Caco-2 (cell line): ENCODE measurements at regions of chr1 and their contacts with region 1.

Region 1: GRCh38 chr1:246608616-246609376 is 42.5 kb downstream of the CNST start:
- DNase-seq: peak; percentile 89 to 91
- H3K4me3 ChIP-seq: peak overlapping the region; percentile 5; the same call in 1 of the 2 replicates
- H3K4me3 Mint-ChIP-seq: peak overlapping the region; percentile 63
- H3K27ac Mint-ChIP-seq: peak overlapping the region; percentile 70
- H3K4me1 ChIP-seq: peaks cover 15% of the 10 kb centered on the region; the same call in 1 of the 2 replicates
- H3K4me1 Mint-ChIP-seq: no peaks in the 10 kb centered on the region
- H3K27me3 ChIP-seq: no peaks in the 10 kb centered on the region
- H3K27me3 Mint-ChIP-seq: no peaks in the 10 kb centered on the region
- CTCF ChIP-seq: peak in 1 of 2 experiments; percentile 33

Region 2: GRCh38 chr1:246506674-246507481 is 101.9 kb before region 1 on chr1 and contains the start of gene SMYD3:
- CTCF ChIA-PET with region 1: no interaction called
- POLR2A ChIA-PET with region 1: no interaction called
- intact Hi-C with region 1: loop called (anchors 5 kb)
- DNase-seq: peak; percentile 72 to 80
- H3K4me3 ChIP-seq: peak within 1 kb of the TSS; percentile 98
- H3K4me3 Mint-ChIP-seq: peak within 1 kb of the TSS; percentile 95
- H3K27ac Mint-ChIP-seq: peak within 1 kb of the TSS; percentile 71
- H3K4me1 ChIP-seq: peaks cover 5% of the 10 kb centered on the region
- H3K4me1 Mint-ChIP-seq: peaks cover 9% of the 10 kb centered on the region
- H3K27me3 ChIP-seq: no peaks in the 10 kb centered on the region
- H3K27me3 Mint-ChIP-seq: no peaks in the 10 kb centered on the region
- CTCF ChIP-seq: peak in 1 of 2 experiments; percentile 24
- total RNA-seq, gene SMYD3: 33.0 and 37.7 TPM in 2 replicates

Region 3: DNA sequence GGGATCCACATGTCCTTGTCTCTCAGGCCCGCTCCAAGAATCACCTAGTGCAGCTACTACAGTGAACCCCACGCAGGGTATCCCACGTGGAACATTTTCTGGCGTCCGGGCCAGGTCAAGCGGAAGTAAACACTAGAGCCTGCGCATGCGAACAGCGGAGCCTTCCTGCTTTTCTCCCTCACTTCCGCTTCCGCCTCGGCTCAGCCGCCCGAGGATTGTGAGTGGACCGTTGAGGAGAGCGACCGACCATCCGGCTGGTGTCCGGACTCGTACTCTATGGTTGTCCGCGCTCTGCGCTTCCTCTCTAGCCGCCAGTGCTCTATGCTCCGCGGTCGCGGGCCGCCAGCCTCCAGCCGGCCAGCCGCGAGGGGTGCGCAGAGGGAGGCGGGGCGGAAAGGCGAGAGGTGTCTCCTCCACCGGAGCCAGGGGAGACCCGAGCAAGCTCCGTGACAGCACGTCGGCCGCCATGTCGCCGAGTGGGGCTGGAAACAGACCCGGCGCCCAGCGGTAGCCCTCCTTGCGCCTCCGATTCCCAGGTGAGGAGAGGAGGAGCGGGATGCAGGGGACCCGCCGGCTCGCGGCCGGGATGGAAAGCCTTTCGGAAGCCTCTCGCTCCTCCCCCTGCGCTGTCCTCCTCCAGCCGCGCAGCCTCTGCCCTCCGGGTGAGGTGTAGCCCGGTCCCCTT is 42.5 kb before region 1 on chr1 and contains the starts of genes CNST and TFB2M:
- CTCF ChIA-PET with region 1: no interaction called
- POLR2A ChIA-PET with region 1: interaction called, 3 read pairs
- intact Hi-C with region 1: loop called (anchors 1 kb)
- DNase-seq: peak; percentile 98
- H3K4me3 ChIP-seq: peak within 1 kb of the TSS; percentile 71
- H3K4me3 Mint-ChIP-seq: peak within 1 kb of the TSS; percentile 93
- H3K27ac Mint-ChIP-seq: peak within 1 kb of the TSS; percentile 90
- H3K4me1 ChIP-seq: peaks cover 4% of the 10 kb centered on the region; the same call in 1 of the 2 replicates
- H3K4me1 Mint-ChIP-seq: peaks cover 8% of the 10 kb centered on the region
- H3K27me3 ChIP-seq: no peaks in the 10 kb centered on the region
- H3K27me3 Mint-ChIP-seq: no peaks in the 10 kb centered on the region
- CTCF ChIP-seq: no peak
- total RNA-seq, gene CNST: 14.8 and 15.3 TPM in 2 replicates
- total RNA-seq, gene TFB2M: 23.4 and 23.9 TPM in 2 replicates

Region 4: GRCh38 chr1:246583056-246583848 is 25.5 kb before region 1 on chr1:
- CTCF ChIA-PET with region 1: no interaction called
- POLR2A ChIA-PET with region 1: no interaction called
- intact Hi-C with region 1: loop called (anchors 1 kb)
- DNase-seq: peak in 1 of 2 experiments; percentile 23
- H3K4me3 ChIP-seq: no peak overlapping the region
- H3K4me3 Mint-ChIP-seq: no peak overlapping the region
- H3K27ac Mint-ChIP-seq: peak overlapping the region; percentile 43
- H3K4me1 ChIP-seq: peaks cover 18% of the 10 kb centered on the region
- H3K4me1 Mint-ChIP-seq: peaks cover 33% of the 10 kb centered on the region
- H3K27me3 ChIP-seq: no peaks in the 10 kb centered on the region
- H3K27me3 Mint-ChIP-seq: no peaks in the 10 kb centered on the region
- CTCF ChIP-seq: no peak